B cell (primary cell): ENCODE measurements at regions of chr16 and their contacts with region 1.

Region 1: GRCh38 chr16:25111403-25112166 is at the start of gene LCMT1:
- DNase-seq: peak; percentile 96
- ATAC-seq: peak; percentile 87
- H3K4me3 ChIP-seq: peak within 1 kb of the TSS; percentile 66 to 94 (median 70)
- H3K4me3 Mint-ChIP-seq: peak within 1 kb of the TSS; percentile 97
- H3K27ac ChIP-seq: peak within 1 kb of the TSS; percentile 43 to 66
- H3K27ac Mint-ChIP-seq: peak within 1 kb of the TSS; percentile 93
- H3K4me1 ChIP-seq: peaks cover 20 to 33% of the 10 kb centered on the region in 2 donors
- H3K4me1 Mint-ChIP-seq: peaks cover 54% of the 10 kb centered on the region
- H3K27me3 ChIP-seq: no peaks in the 10 kb centered on the region
- H3K27me3 Mint-ChIP-seq: no peaks in the 10 kb centered on the region
- CTCF ChIP-seq: no peak
- total RNA-seq, gene LCMT1: 42.0 and 45.1 TPM in 2 replicates

Region 2: GRCh38 chr16:24539291-24539849 is 572.2 kb before region 1 on chr16 and contains the start of gene RBBP6:
- CTCF ChIA-PET with region 1: no interaction called
- POLR2A ChIA-PET with region 1: no interaction called
- intact Hi-C with region 1: loop called (anchors 2 kb)
- DNase-seq: peak; percentile 99
- ATAC-seq: peak; percentile 92
- H3K4me3 ChIP-seq: peak within 1 kb of the TSS; percentile 81 to 99 (median 97)
- H3K4me3 Mint-ChIP-seq: peak within 1 kb of the TSS; percentile 99
- H3K27ac ChIP-seq: peak within 1 kb of the TSS; percentile 99 to 100
- H3K27ac Mint-ChIP-seq: peak within 1 kb of the TSS; percentile 100
- H3K4me1 ChIP-seq: peaks cover 41 to 42% of the 10 kb centered on the region in 2 donors
- H3K4me1 Mint-ChIP-seq: peaks cover 41% of the 10 kb centered on the region
- H3K27me3 ChIP-seq: no peaks in the 10 kb centered on the region
- H3K27me3 Mint-ChIP-seq: no peaks in the 10 kb centered on the region
- CTCF ChIP-seq: no peak
- total RNA-seq, gene RBBP6: 132 and 139 TPM in 2 replicates

Region 3: DNA sequence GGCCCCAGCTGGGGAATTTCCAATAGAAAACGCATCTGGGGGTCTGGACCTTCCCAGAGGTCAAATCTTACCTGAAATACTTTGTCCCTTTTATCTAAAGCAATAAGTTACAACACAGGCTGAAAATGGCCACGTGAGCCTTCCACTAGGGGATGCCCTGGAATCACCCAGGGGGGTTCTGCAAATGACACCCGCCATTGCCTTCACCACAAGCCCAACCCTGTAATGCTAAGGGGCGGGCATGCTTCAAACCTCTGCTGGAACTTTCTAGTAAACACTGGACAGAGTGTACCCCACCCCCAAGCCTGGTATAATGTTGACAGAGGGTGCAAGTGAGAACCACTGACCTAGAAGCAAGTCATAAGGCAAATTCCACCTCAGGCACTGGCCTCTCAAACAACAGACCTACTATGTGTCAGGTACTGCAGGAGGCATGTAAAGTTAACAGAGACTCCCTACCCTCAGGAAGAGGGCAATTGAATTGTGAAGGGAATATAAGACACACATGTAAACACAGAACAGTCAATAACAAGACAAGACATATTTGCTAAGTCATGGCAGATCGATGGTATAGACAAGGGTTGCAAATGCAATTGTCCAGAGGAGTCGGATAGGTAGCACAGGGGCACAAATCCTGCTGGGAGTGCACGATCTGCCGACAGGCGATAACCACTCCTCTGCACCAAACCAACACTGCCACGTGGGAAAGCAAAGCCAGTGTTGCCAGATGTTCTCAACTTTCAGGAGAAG is 155.4 kb before region 1 on chr16:
- CTCF ChIA-PET with region 1: interaction called, 3 read pairs
- POLR2A ChIA-PET with region 1: no interaction called
- intact Hi-C with region 1: loop called (anchors 2 kb)
- DNase-seq: no peak
- ATAC-seq: peak; percentile 41
- H3K4me3 ChIP-seq: no peak overlapping the region
- H3K4me3 Mint-ChIP-seq: no peak overlapping the region
- H3K27ac ChIP-seq: no peak overlapping the region
- H3K27ac Mint-ChIP-seq: no peak overlapping the region
- H3K4me1 ChIP-seq: no peaks in the 10 kb centered on the region
- H3K4me1 Mint-ChIP-seq: peaks cover 5% of the 10 kb centered on the region
- H3K27me3 ChIP-seq: no peaks in the 10 kb centered on the region
- H3K27me3 Mint-ChIP-seq: no peaks in the 10 kb centered on the region
- CTCF ChIP-seq: no peak

Region 4: DNA sequence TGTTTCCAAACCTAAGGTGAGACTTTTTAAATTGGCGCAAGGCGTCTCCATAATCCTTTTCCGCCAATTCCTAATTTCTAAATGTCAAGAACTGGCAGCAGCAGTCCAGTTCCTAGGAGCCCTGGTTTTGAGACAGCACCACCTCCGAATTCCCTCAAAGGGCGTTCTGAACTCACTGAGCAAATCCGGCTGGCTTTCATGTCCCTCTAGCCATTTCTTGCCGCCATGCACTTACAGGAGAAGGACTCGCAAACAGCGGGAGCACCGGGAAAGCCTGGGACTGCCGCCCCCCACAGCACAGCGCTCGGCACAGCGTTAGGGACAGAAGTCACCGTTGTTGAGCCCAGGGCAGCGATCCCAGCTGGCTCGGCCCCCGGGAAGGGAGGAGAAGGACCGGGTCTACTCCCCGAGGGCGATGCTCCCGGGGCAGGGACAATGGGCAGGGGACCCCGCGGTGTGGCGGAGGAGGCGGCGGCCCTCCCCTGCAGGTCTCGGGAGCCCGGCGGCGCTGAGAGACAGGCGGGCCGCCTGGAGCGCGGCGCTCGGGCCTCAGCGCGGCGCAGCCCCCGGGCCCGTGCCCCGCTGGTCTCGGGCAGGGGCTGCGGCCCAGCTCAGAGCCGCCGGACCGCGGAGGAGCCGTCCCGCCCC is 97.0 kb before region 1 on chr16:
- CTCF ChIA-PET with region 1: interaction called, 3 read pairs
- POLR2A ChIA-PET with region 1: interaction called, 3 read pairs
- intact Hi-C with region 1: loop called (anchors 1 kb)
- DNase-seq: no peak
- ATAC-seq: peak; percentile 16
- H3K4me3 ChIP-seq: peak overlapping the region; percentile 73 to 92 (median 79)
- H3K4me3 Mint-ChIP-seq: peak overlapping the region; percentile 97
- H3K27ac ChIP-seq: peak overlapping the region; percentile 61 to 89
- H3K27ac Mint-ChIP-seq: peak overlapping the region; percentile 96
- H3K4me1 ChIP-seq: peaks cover 75 to 80% of the 10 kb centered on the region in 2 donors
- H3K4me1 Mint-ChIP-seq: peaks cover 84% of the 10 kb centered on the region
- H3K27me3 ChIP-seq: no peaks in the 10 kb centered on the region
- H3K27me3 Mint-ChIP-seq: no peaks in the 10 kb centered on the region
- CTCF ChIP-seq: no peak

Region 5: GRCh38 chr16:25051406-25052150 is 60.0 kb before region 1 on chr16:
- CTCF ChIA-PET with region 1: interaction called, 84 read pairs
- POLR2A ChIA-PET with region 1: interaction called, 9 read pairs
- intact Hi-C with region 1: loop called (anchors 1 kb)
- DNase-seq: no peak
- ATAC-seq: no peak
- H3K4me3 ChIP-seq: peak overlapping the region in 1 of 5 experiments; percentile 24
- H3K4me3 Mint-ChIP-seq: peak overlapping the region; percentile 66
- H3K27ac ChIP-seq: peak overlapping the region in 1 of 2 donors; percentile 27
- H3K27ac Mint-ChIP-seq: peak overlapping the region; percentile 74
- H3K4me1 ChIP-seq: peaks cover 34 to 38% of the 10 kb centered on the region in 2 donors
- H3K4me1 Mint-ChIP-seq: peaks cover 41% of the 10 kb centered on the region
- H3K27me3 ChIP-seq: no peaks in the 10 kb centered on the region
- H3K27me3 Mint-ChIP-seq: no peaks in the 10 kb centered on the region
- CTCF ChIP-seq: no peak

Region 6: DNA sequence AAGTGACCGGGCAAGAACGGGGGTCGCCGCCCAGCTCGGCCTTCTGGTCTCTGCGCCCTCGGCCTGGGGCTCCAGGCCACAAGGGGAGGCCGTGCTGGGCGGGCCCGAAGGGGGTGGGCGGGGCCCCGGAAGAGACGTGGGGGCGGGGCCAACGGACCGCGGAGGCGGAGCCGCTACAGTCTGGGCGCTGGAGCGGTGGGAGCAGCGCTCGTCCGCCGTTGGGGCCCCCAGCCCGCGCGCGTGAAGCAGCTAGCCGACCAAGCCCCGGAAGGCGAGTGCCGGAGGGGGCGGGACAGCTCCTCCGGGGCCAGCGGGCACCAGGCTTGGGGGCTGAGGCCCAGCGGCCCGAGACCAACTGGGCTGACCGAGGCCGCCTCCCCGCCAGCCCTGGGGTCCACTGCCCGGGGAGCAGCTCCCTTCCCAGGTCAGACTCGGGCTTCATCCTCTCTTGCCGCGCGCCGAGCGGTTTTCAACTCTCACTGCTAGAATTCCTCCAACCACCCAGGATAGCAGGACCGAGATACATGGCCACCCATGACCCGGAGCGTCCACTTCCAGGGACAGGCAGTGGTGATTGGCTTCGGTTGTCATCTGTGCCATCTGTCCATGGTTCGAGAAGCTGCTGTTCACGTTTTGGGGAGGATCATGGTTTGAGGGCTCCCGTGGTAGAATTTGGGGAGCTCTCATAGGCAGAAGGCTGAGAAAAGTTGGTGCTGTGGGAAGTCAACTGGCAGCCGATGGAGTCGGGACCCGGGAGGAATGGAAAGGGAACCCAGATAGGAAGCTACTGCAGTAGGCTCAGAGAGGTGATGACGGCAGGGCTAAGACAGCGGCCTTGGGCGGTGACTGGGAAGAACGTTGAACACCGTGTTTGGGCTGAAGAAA is 44.6 kb before region 1 on chr16:
- CTCF ChIA-PET with region 1: interaction called, 16 read pairs
- POLR2A ChIA-PET with region 1: interaction called, 8 read pairs
- intact Hi-C with region 1: loop called (anchors 1 kb)
- DNase-seq: peak; percentile 91
- ATAC-seq: peak; percentile 96
- H3K4me3 ChIP-seq: peak overlapping the region; percentile 72 to 95 (median 89)
- H3K4me3 Mint-ChIP-seq: peak overlapping the region; percentile 90
- H3K27ac ChIP-seq: peak overlapping the region; percentile 81 to 84
- H3K27ac Mint-ChIP-seq: peak overlapping the region; percentile 93
- H3K4me1 ChIP-seq: peaks cover 41 to 53% of the 10 kb centered on the region in 2 donors
- H3K4me1 Mint-ChIP-seq: peaks cover 55% of the 10 kb centered on the region
- H3K27me3 ChIP-seq: no peaks in the 10 kb centered on the region
- H3K27me3 Mint-ChIP-seq: no peaks in the 10 kb centered on the region
- CTCF ChIP-seq: no peak

Region 7: GRCh38 chr16:25834101-25834500 is 722.5 kb after region 1 on chr16:
- CTCF ChIA-PET with region 1: no interaction called
- POLR2A ChIA-PET with region 1: no interaction called
- intact Hi-C with region 1: no loop called
- DNase-seq: no peak
- ATAC-seq: no peak
- H3K4me3 ChIP-seq: no peak overlapping the region
- H3K4me3 Mint-ChIP-seq: no peak overlapping the region
- H3K27ac ChIP-seq: no peak overlapping the region
- H3K27ac Mint-ChIP-seq: no peak overlapping the region
- H3K4me1 ChIP-seq: peaks cover 4 to 5% of the 10 kb centered on the region in 2 donors
- H3K4me1 Mint-ChIP-seq: no peaks in the 10 kb centered on the region
- H3K27me3 ChIP-seq: peaks cover 0 to 3% (median 0%) of the 10 kb centered on the region in 4 experiments
- H3K27me3 Mint-ChIP-seq: peaks cover 18% of the 10 kb centered on the region
- CTCF ChIP-seq: no peak